Caco-2 (cell line): ENCODE measurements at regions of chr7 and their contacts with region 1.

Region 1: GRCh38 chr7:87330942-87331341 is 14.5 kb upstream of the CROT start:
- DNase-seq: peak; percentile 63 to 69
- H3K4me3 ChIP-seq: no peak overlapping the region
- H3K4me3 Mint-ChIP-seq: no peak overlapping the region
- H3K27ac Mint-ChIP-seq: peak overlapping the region; percentile 78
- H3K4me1 ChIP-seq: peaks cover 24% of the 10 kb centered on the region
- H3K4me1 Mint-ChIP-seq: peaks cover 7% of the 10 kb centered on the region
- H3K27me3 ChIP-seq: no peaks in the 10 kb centered on the region
- H3K27me3 Mint-ChIP-seq: no peaks in the 10 kb centered on the region
- CTCF ChIP-seq: no peak

Region 2: GRCh38 chr7:87300756-87301155 is 30.2 kb before region 1 on chr7:
- CTCF ChIA-PET with region 1: no interaction called
- POLR2A ChIA-PET with region 1: no interaction called
- intact Hi-C with region 1: no loop called
- DNase-seq: no peak
- H3K4me3 ChIP-seq: no peak overlapping the region
- H3K4me3 Mint-ChIP-seq: no peak overlapping the region
- H3K27ac Mint-ChIP-seq: no peak overlapping the region
- H3K4me1 ChIP-seq: no peaks in the 10 kb centered on the region
- H3K4me1 Mint-ChIP-seq: no peaks in the 10 kb centered on the region
- H3K27me3 ChIP-seq: no peaks in the 10 kb centered on the region; the same call in 1 of the 2 replicates
- H3K27me3 Mint-ChIP-seq: peaks cover 3% of the 10 kb centered on the region
- CTCF ChIP-seq: no peak

Region 3: GRCh38 chr7:87345166-87345927 is 14.4 kb after region 1 on chr7 and contains the start of gene CROT:
- CTCF ChIA-PET with region 1: no interaction called
- POLR2A ChIA-PET with region 1: no interaction called
- intact Hi-C with region 1: loop called (anchors 1 kb)
- DNase-seq: peak; percentile 96 to 97
- H3K4me3 ChIP-seq: peak within 1 kb of the TSS; percentile 71
- H3K4me3 Mint-ChIP-seq: peak within 1 kb of the TSS; percentile 84
- H3K27ac Mint-ChIP-seq: peak within 1 kb of the TSS; percentile 80
- H3K4me1 ChIP-seq: peaks cover 9% of the 10 kb centered on the region; the same call in 1 of the 2 replicates
- H3K4me1 Mint-ChIP-seq: no peaks in the 10 kb centered on the region
- H3K27me3 ChIP-seq: no peaks in the 10 kb centered on the region
- H3K27me3 Mint-ChIP-seq: no peaks in the 10 kb centered on the region
- CTCF ChIP-seq: no peak
- total RNA-seq, gene CROT: 15.4 and 16.9 TPM in 2 replicates